CD8-positive, alpha-beta T cell (primary cell): ENCODE measurements at regions of chr7 and their contacts with region 1.

Region 1: GRCh38 chr7:101743241-101743994 is 74.0 kb upstream of the CUX1 start:
- DNase-seq: peak; percentile 44 to 79 (median 68)
- ATAC-seq: peak; percentile 76
- H3K4me3 ChIP-seq: peak overlapping the region; percentile 56 to 69
- H3K4me3 Mint-ChIP-seq: peak overlapping the region; percentile 81
- H3K27ac ChIP-seq: no peak overlapping the region
- H3K27ac Mint-ChIP-seq: no peak overlapping the region
- H3K4me1 ChIP-seq: peaks cover 39% of the 10 kb centered on the region
- H3K4me1 Mint-ChIP-seq: peaks cover 32% of the 10 kb centered on the region
- H3K27me3 ChIP-seq: peaks cover 0 to 3% of the 10 kb centered on the region in 2 experiments
- H3K27me3 Mint-ChIP-seq: no peaks in the 10 kb centered on the region
- CTCF ChIP-seq: peak; percentile 59

Region 2: GRCh38 chr7:101754424-101755159 is 11.2 kb after region 1 on chr7:
- CTCF ChIA-PET with region 1: interaction called, 10 read pairs
- POLR2A ChIA-PET with region 1: no interaction called
- intact Hi-C with region 1: no loop called
- DNase-seq: peak in 1 of 9 experiments; percentile 56
- ATAC-seq: no peak
- H3K4me3 ChIP-seq: peak overlapping the region; percentile 49 to 60
- H3K4me3 Mint-ChIP-seq: peak overlapping the region; percentile 80
- H3K27ac ChIP-seq: no peak overlapping the region
- H3K27ac Mint-ChIP-seq: peak overlapping the region; percentile 56
- H3K4me1 ChIP-seq: peaks cover 5% of the 10 kb centered on the region
- H3K4me1 Mint-ChIP-seq: peaks cover 13% of the 10 kb centered on the region
- H3K27me3 ChIP-seq: no peaks in the 10 kb centered on the region
- H3K27me3 Mint-ChIP-seq: no peaks in the 10 kb centered on the region
- CTCF ChIP-seq: no peak

Region 3: DNA sequence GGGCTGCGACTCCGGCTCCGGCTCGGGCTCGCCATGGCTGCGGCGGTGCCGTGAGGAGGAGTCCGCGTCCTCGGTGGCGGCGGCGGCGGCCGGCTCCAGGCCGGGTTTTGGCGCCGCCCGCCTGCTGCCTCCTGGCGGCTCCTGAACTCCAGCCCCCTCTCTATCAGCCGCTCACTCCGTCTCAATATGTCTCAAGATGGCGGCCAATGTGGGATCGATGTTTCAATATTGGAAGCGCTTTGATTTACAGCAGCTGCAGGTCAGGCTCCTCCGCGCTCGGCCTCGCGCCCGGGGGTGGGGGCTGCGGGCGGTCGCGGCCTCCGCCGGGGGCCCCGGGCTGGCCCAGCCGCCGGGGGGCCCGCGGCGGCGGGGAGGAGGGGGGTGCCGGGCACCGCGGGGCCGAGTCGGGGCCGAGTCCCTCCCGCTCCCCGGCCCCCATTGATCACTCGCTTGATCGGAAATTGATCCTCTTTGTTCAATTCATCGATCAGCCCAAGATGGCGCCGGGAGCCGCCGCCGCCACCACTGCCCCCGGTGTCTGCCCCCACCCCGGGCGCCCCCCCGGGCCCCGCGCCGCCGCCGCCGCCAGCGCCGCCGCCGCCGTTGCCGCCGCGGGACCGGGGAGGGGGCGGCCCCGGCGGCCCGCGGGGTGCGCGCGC is 72.5 kb after region 1 on chr7:
- CTCF ChIA-PET with region 1: interaction called, 13 read pairs
- POLR2A ChIA-PET with region 1: interaction called, 8 read pairs
- intact Hi-C with region 1: loop called (anchors 1 kb)
- DNase-seq: peak; percentile 39 to 88 (median 71)
- ATAC-seq: peak; percentile 78
- H3K4me3 ChIP-seq: peak overlapping the region; percentile 38 to 55
- H3K4me3 Mint-ChIP-seq: peak overlapping the region; percentile 85
- H3K27ac ChIP-seq: no peak overlapping the region
- H3K27ac Mint-ChIP-seq: no peak overlapping the region
- H3K4me1 ChIP-seq: peaks cover 16% of the 10 kb centered on the region
- H3K4me1 Mint-ChIP-seq: peaks cover 36% of the 10 kb centered on the region
- H3K27me3 ChIP-seq: no peaks in the 10 kb centered on the region
- H3K27me3 Mint-ChIP-seq: no peaks in the 10 kb centered on the region
- CTCF ChIP-seq: no peak

Region 4: DNA sequence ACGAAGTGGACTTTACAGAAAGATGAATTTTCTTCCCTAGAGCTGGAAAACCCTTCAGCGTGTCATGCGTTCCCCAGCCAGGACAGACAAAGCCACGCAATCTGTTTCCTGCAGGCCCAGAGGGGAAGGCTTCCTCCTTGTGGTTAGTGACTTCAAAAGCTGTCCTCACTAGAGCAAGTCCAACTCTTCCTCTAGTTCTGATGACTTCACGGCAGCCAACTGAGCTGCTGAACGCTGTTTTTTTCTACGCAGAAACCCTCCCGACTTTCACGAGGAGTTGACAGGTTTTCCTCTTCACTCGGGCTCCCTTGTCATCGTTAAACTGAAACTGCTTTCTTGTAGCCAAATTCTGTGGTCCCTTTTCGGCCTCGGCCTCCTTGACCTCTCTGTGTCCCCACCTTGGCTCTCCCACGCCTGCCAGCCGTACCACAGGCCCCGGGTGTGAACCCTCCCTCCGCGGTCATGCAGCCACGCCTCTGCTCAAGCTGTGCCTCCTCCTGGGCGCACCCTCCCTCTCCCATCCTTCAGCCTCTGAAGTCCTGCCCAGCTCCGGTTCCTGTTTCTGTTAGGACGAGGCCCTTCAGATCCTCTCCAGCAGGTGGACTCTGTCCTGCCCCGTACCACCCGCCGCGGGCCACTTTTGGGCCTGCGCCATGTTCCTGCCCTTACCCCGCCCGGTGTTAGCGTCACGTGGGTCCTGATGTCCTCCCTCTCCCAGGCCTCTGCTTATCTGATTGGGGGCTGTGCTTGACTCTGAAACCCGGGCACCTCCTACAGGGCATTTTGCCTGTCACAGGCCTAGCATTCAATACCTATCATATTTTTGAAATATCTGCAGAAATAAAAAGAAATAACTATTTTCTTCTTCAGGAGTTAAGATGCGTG is 113.3 kb after region 1 on chr7:
- CTCF ChIA-PET with region 1: interaction called, 5 read pairs
- POLR2A ChIA-PET with region 1: no interaction called
- intact Hi-C with region 1: loop called in 1 of 2 experiments (anchors 2 kb)
- DNase-seq: peak; percentile 62 to 90 (median 77)
- ATAC-seq: peak; percentile 92
- H3K4me3 ChIP-seq: peak overlapping the region; percentile 59 to 69
- H3K4me3 Mint-ChIP-seq: peak overlapping the region; percentile 99
- H3K27ac ChIP-seq: peak overlapping the region; percentile 62 to 88
- H3K27ac Mint-ChIP-seq: peak overlapping the region; percentile 99
- H3K4me1 ChIP-seq: peaks cover 20% of the 10 kb centered on the region
- H3K4me1 Mint-ChIP-seq: peaks cover 50% of the 10 kb centered on the region
- H3K27me3 ChIP-seq: no peaks in the 10 kb centered on the region
- H3K27me3 Mint-ChIP-seq: no peaks in the 10 kb centered on the region
- CTCF ChIP-seq: peak; percentile 55